SK-N-SH (cell line): ENCODE measurements at regions of chr19 and their contacts with region 1.

Region 1: DNA sequence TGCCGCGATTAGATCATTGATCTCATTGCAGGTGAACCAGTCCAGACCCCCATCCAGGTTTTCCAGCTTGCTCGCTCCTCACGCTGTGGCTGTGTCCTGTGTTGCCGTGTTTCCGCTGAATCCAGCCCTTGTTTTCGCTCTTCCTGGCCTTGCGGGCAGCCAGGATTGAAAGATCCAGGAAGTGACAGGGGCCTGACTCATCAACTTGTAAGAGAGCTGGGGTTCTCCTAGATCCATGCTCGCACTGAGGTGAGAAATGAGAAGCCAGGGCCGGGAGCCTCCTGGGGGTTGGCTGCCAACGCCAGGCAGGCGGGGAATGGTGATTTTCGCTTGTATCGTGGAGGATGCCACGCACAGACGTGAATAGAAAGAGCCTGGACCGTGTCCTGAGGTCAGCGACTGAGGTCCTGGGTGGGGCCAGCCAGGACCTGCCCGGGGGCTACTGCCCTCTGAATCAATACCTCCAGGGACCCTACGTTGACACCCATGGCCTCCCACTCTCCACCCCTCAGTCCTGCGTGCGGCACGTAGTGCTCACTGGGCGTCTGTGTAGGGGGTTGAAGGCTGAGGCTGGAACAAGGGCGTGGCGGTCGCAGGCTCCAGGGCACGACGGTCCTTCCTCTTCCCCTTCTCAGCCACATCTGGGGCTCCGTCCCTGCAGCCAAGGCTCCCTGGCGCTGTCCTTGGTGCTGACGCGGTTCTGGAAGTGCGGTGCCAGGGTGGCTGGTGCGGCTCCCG is 7.3 kb upstream of the PTPRH start:
- DNase-seq: peak; percentile 91
- H3K4me3 ChIP-seq: peak overlapping the region; percentile 59 to 66
- H3K27ac ChIP-seq: peak overlapping the region; percentile 83 to 88
- H3K4me1 ChIP-seq: peaks cover 0 to 5% of the 10 kb centered on the region in 2 experiments; a peak in 1 of 4 replicates
- H3K27me3 ChIP-seq: no peaks in the 10 kb centered on the region
- CTCF ChIP-seq: no peak
- EP300 ChIP-seq: peak; percentile 64 to 81; a peak in 3 of 4 replicates
- RAD21 ChIP-seq: peak; percentile 48

Region 2: GRCh38 chr19:55178781-55179599 is 37.6 kb before region 1 on chr19:
- CTCF ChIA-PET with region 1: interaction called, 4 read pairs
- POLR2A ChIA-PET with region 1: interaction called, 13 read pairs
- DNase-seq: peak; percentile 97
- H3K4me3 ChIP-seq: peak overlapping the region; percentile 54 to 56
- H3K27ac ChIP-seq: peak overlapping the region in 1 of 2 experiments; percentile 77; a peak in 1 of 4 replicates
- H3K4me1 ChIP-seq: peaks cover 0 to 6% of the 10 kb centered on the region in 2 experiments; a peak in 1 of 4 replicates
- H3K27me3 ChIP-seq: peaks cover 29% of the 10 kb centered on the region
- CTCF ChIP-seq: no peak
- EP300 ChIP-seq: peak in 1 of 2 experiments; percentile 29; a peak in 1 of 4 replicates
- RAD21 ChIP-seq: peak; percentile 29

Region 3: DNA sequence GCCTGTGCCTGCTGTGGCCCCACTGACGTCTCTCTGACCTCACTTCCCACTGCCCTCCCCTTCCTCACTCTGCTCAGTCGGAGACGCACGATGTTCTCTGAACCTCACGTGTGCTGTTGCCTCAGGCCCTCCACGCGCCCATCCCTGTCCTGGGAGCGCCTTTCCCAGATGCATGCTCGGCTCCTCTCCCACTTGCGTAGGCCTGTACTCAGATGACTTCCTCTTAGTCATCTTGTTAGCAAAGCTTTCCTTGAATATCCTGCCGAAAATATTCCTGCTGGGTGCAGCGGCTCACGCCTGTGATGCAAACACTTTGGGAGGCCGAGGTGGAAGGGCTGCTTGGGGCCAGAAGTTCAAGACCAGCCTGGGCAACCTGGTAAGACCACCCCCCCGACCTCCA is 27.2 kb before region 1 on chr19:
- CTCF ChIA-PET with region 1: no interaction called
- POLR2A ChIA-PET with region 1: no interaction called
- DNase-seq: no peak
- H3K4me3 ChIP-seq: no peak overlapping the region
- H3K27ac ChIP-seq: peak overlapping the region in 1 of 2 experiments; percentile 46; a peak in 1 of 4 replicates
- H3K4me1 ChIP-seq: no peaks in the 10 kb centered on the region
- H3K27me3 ChIP-seq: peaks cover 5% of the 10 kb centered on the region; the same call in 1 of the 2 replicates
- CTCF ChIP-seq: no peak
- EP300 ChIP-seq: no peak
- RAD21 ChIP-seq: no peak

Region 4: GRCh38 chr19:55199623-55200204 is 16.9 kb before region 1 on chr19:
- CTCF ChIA-PET with region 1: no interaction called
- POLR2A ChIA-PET with region 1: no interaction called
- DNase-seq: no peak
- H3K4me3 ChIP-seq: no peak overlapping the region
- H3K27ac ChIP-seq: no peak overlapping the region
- H3K4me1 ChIP-seq: no peaks in the 10 kb centered on the region
- H3K27me3 ChIP-seq: no peaks in the 10 kb centered on the region
- CTCF ChIP-seq: no peak
- EP300 ChIP-seq: no peak
- RAD21 ChIP-seq: no peak

Region 5: DNA sequence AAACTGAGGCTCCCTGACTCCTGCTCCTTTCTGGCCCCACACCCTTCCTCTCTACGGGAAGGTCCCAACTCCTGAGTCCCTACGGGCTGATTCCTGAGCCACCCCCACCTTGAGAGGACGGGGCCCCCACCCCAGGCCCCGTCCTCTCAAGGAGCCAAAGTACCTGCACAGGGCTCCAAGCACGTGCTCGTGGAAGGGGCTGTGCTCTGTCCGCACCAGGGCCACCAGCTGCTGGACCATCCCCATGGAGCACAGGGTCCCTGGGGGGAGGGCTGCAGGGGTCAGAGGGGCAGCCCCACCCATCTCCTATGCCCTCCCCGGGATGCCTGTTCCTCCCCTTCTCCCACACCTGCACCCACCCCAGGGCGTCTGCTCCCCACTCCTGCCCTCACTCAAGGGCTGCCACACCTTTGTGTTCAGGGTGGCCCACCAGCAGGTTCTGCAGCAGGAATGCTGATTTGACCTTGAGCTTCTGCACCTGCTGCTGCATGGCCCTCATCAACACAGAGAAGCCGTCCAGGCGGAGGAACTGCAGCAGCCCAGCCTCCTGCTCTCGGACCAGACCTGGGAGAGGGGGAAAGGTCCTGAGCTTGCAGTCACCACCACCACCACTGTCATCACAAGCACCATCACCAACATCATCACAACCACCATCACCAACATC is 49.2 kb after region 1 on chr19:
- CTCF ChIA-PET with region 1: no interaction called
- POLR2A ChIA-PET with region 1: no interaction called
- DNase-seq: no peak
- H3K4me3 ChIP-seq: no peak overlapping the region
- H3K27ac ChIP-seq: no peak overlapping the region
- H3K4me1 ChIP-seq: no peaks in the 10 kb centered on the region
- H3K27me3 ChIP-seq: no peaks in the 10 kb centered on the region
- CTCF ChIP-seq: no peak
- EP300 ChIP-seq: no peak
- RAD21 ChIP-seq: no peak